Breast epithelium (tissue), 4 donors: ENCODE measurements at regions of chr21 and their contacts with region 1.

Region 1: GRCh38 chr21:33552093-33552998 is 9.5 kb downstream of the SON start:
- DNase-seq: no peak
- H3K4me3 ChIP-seq: no peak overlapping the region
- H3K27ac ChIP-seq: no peak overlapping the region
- H3K4me1 ChIP-seq: peaks cover 0 to 8% of the 10 kb centered on the region in 2 donors
- H3K27me3 ChIP-seq: no peaks in the 10 kb centered on the region
- CTCF ChIP-seq: no peak
- POLR2A ChIP-seq: no peak

Region 2: DNA sequence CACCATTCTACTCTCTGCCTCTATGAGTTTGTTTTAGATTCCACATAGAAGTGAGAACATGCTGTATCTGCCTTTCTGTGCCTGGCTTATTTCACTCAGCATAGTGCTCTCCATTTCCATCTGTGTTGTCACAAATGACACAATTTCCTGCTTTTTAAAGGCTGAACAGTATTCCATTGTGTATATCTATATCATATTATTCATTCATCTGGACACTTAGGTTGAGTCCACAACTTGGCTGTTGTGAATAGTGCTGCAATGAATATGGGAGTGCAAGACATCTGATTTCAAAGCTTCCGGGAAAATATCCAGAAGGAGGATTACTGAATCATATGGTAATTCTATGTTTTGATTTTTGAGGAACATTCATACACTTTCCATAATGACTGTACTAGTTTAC is 56.2 kb after region 1 on chr21:
- intact Hi-C with region 1: no loop called
- DNase-seq: no peak
- H3K4me3 ChIP-seq: no peak overlapping the region
- H3K27ac ChIP-seq: no peak overlapping the region
- H3K4me1 ChIP-seq: no peaks in the 10 kb centered on the region
- H3K27me3 ChIP-seq: no peaks in the 10 kb centered on the region
- CTCF ChIP-seq: no peak
- POLR2A ChIP-seq: no peak

Region 3: GRCh38 chr21:34017039-34017961 is 465.0 kb after region 1 on chr21:
- intact Hi-C with region 1: loop called (anchors 5 kb)
- DNase-seq: no peak
- H3K4me3 ChIP-seq: no peak overlapping the region
- H3K27ac ChIP-seq: no peak overlapping the region
- H3K4me1 ChIP-seq: no peaks in the 10 kb centered on the region
- H3K27me3 ChIP-seq: no peaks in the 10 kb centered on the region
- CTCF ChIP-seq: no peak
- POLR2A ChIP-seq: no peak